Caco-2 (cell line): ENCODE measurements at regions of chr20 and their contacts with region 1.

Region 1: GRCh38 chr20:38043512-38044300 is 10.2 kb downstream of the RPRD1B start:
- DNase-seq: no peak
- H3K4me3 ChIP-seq: no peak overlapping the region
- H3K4me3 Mint-ChIP-seq: no peak overlapping the region
- H3K27ac Mint-ChIP-seq: no peak overlapping the region
- H3K4me1 ChIP-seq: 0 out of 2 replicates have a peak, but pooled peaks cover 8% of the 10 kb centered on the region
- H3K4me1 Mint-ChIP-seq: peaks cover 23% of the 10 kb centered on the region
- H3K27me3 ChIP-seq: no peaks in the 10 kb centered on the region
- H3K27me3 Mint-ChIP-seq: no peaks in the 10 kb centered on the region
- CTCF ChIP-seq: no peak

Region 2: GRCh38 chr20:37990571-37991151 is 53.0 kb before region 1 on chr20:
- CTCF ChIA-PET with region 1: no interaction called
- POLR2A ChIA-PET with region 1: no interaction called
- intact Hi-C with region 1: no loop called
- DNase-seq: no peak
- H3K4me3 ChIP-seq: no peak overlapping the region
- H3K4me3 Mint-ChIP-seq: no peak overlapping the region
- H3K27ac Mint-ChIP-seq: no peak overlapping the region
- H3K4me1 ChIP-seq: peaks cover 47% of the 10 kb centered on the region
- H3K4me1 Mint-ChIP-seq: peaks cover 39% of the 10 kb centered on the region
- H3K27me3 ChIP-seq: no peaks in the 10 kb centered on the region
- H3K27me3 Mint-ChIP-seq: no peaks in the 10 kb centered on the region
- CTCF ChIP-seq: no peak

Region 3: GRCh38 chr20:38033310-38034107 is 10.2 kb before region 1 on chr20 and contains the starts of genes RPRD1B and TTI1:
- CTCF ChIA-PET with region 1: no interaction called
- POLR2A ChIA-PET with region 1: interaction called, 10 read pairs
- intact Hi-C with region 1: no loop called
- DNase-seq: peak; percentile 96 to 98
- H3K4me3 ChIP-seq: peak within 1 kb of the TSS; percentile 79
- H3K4me3 Mint-ChIP-seq: peak within 1 kb of the TSS; percentile 95
- H3K27ac Mint-ChIP-seq: peak within 1 kb of the TSS; percentile 97
- H3K4me1 ChIP-seq: peaks cover 41% of the 10 kb centered on the region
- H3K4me1 Mint-ChIP-seq: peaks cover 43% of the 10 kb centered on the region
- H3K27me3 ChIP-seq: no peaks in the 10 kb centered on the region
- H3K27me3 Mint-ChIP-seq: no peaks in the 10 kb centered on the region
- CTCF ChIP-seq: peak in 1 of 2 experiments; percentile 14
- total RNA-seq, gene RPRD1B: 102 and 112 TPM in 2 replicates
- total RNA-seq, gene TTI1: 59.2 and 62.3 TPM in 2 replicates